Activated naive CD4-positive, alpha-beta T cell treated with anti-CD3 and anti-CD28 coated beads for 36 hours (primary cell): ENCODE measurements at regions of chr11 and their contacts with region 1.

Region 1: DNA sequence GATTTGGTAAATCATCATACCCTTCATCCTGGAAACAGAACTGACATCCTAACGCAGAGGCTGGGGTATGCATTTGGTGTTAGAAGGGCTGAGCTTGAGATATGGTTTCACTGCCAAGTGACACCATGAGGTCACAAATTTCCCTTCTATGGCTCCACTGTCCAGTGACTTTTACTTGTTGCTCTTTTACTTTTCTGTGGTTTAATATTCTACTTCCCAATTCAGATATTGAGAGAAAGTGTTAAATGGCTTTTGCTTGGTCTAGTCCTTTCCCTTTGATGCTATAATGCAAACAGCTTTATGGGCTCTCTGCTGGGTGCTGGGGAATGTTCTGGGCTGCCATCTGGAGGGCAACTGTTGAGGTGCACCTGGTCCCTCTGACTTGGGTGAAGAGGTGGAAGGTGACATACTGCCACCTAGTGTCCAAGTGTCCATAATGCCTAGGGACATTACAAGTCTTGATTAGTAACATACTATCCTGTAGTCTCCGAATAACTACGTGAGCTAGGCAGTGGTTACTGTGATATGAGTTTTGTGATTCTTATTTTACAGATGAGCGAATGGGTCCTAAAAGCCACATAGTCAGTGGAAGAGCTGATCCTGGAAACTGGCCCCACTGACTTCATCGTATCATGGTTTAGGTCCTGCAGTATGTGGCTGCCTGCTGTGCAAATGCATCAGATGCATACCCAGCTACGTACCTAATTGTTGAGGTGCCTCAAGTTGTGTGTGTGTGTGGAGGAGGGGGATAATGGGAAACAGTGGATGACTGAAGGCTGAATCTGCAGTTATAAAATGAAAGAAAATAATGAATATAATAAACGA is 149.1 kb upstream of the RAG2 start:
- DNase-seq: peak; percentile 92
- H3K4me3 Mint-ChIP-seq: no peak overlapping the region
- H3K27ac Mint-ChIP-seq: peak overlapping the region; percentile 25
- H3K4me1 Mint-ChIP-seq: no peaks in the 10 kb centered on the region
- H3K27me3 Mint-ChIP-seq: peaks cover 24% of the 10 kb centered on the region

Region 2: DNA sequence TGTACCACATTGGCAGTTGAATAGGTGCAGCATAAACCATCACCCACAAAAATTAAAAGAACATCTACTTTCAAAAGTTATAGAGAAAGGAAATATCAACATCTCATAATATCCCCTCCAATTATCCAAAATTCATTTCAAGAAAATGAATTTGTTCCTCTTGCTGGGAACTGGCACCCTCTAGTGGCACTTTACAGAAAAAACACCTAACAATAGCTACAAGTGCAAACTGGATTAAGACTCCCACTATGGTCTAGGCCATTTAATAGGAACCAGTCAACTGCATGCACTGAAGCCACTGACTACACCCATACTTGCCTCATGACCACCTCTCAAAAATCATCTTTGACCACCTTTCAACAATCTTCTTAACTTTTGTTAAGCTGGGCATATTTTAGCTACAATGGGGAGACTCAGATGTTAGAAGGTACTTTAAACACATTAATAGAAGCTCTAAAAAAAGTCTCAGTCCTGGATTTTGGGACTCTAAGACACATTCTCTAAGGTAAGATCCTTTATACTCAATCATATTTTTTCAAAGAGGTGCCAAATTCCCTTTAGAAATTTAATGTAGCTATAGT is 254.3 kb before region 1 on chr11:
- CTCF ChIA-PET with region 1: interaction called, 4 read pairs
- intact Hi-C with region 1: loop called (anchors 5 kb)
- DNase-seq: peak; percentile 44
- H3K4me3 Mint-ChIP-seq: no peak overlapping the region
- H3K27ac Mint-ChIP-seq: peak overlapping the region; percentile 28
- H3K4me1 Mint-ChIP-seq: peaks cover 22% of the 10 kb centered on the region
- H3K27me3 Mint-ChIP-seq: no peaks in the 10 kb centered on the region

Region 3: GRCh38 chr11:36564376-36565030 is 182.6 kb before region 1 on chr11:
- CTCF ChIA-PET with region 1: interaction called, 111 read pairs
- intact Hi-C with region 1: loop called (anchors 1 kb)
- DNase-seq: peak; percentile 65
- H3K4me3 Mint-ChIP-seq: peak overlapping the region; percentile 47
- H3K27ac Mint-ChIP-seq: no peak overlapping the region
- H3K4me1 Mint-ChIP-seq: peaks cover 2% of the 10 kb centered on the region
- H3K27me3 Mint-ChIP-seq: peaks cover 24% of the 10 kb centered on the region

Region 4: DNA sequence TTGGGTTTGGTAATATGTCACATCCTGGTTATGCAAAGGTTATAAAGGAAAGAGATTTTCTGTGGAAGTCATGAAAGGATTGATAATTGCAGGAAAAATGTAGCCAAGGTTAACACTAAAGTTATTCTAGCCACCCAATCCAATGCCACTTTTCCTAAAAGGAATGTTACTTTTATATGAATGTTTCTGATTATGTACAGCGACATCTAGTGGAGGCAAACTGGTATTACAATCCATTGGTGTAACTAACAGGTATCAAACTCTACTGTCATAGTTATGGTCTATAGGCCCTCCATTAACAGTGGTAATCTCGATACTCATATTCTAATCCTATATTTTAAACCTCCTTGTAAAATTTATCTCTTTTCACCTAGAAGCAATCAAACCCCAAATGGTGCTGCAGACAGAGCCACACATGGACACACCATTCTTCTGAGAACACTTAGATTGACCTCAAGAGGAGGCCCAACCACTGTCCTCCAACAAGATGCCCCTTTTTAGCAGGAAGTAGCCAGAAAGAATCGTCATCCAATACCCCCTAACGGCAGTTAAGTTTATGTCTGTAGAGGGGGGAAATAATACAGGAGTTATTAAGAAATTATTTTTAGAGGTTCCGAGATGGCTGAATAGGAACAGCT is 74.2 kb before region 1 on chr11:
- CTCF ChIA-PET with region 1: interaction called, 5 read pairs
- intact Hi-C with region 1: loop called (anchors 1 kb)
- DNase-seq: peak; percentile 14
- H3K4me3 Mint-ChIP-seq: no peak overlapping the region
- H3K27ac Mint-ChIP-seq: no peak overlapping the region
- H3K4me1 Mint-ChIP-seq: no peaks in the 10 kb centered on the region
- H3K27me3 Mint-ChIP-seq: peaks cover 21% of the 10 kb centered on the region

Region 5: GRCh38 chr11:36711106-36711825 is 35.8 kb before region 1 on chr11:
- CTCF ChIA-PET with region 1: interaction called, 11 read pairs
- intact Hi-C with region 1: no loop called
- DNase-seq: no peak
- H3K4me3 Mint-ChIP-seq: no peak overlapping the region
- H3K27ac Mint-ChIP-seq: no peak overlapping the region
- H3K4me1 Mint-ChIP-seq: no peaks in the 10 kb centered on the region
- H3K27me3 Mint-ChIP-seq: peaks cover 20% of the 10 kb centered on the region